ENCODE measurements at regions of chr12 and their contacts with region 1.

Region 1: GRCh38 chr12:6069437-6070107 is 54.9 kb downstream of the VWF start:
- DNase-seq: peak in 1 of 5 donors; percentile 52
- ATAC-seq: peak in 2 of 4 donors; percentile 36 to 61
- H3K4me3 ChIP-seq: no peak overlapping the region
- H3K27ac ChIP-seq: peak overlapping the region in 8 of 12 donors; percentile 18 to 87 (median 30)
- H3K4me1 ChIP-seq: peaks cover under 1 to 52% (median 20%) of the 10 kb centered on the region in 12 donors
- H3K27me3 ChIP-seq: no peaks in the 10 kb centered on the region
- CTCF ChIP-seq: no peak
- POLR2A ChIP-seq: no peak

Region 2: DNA sequence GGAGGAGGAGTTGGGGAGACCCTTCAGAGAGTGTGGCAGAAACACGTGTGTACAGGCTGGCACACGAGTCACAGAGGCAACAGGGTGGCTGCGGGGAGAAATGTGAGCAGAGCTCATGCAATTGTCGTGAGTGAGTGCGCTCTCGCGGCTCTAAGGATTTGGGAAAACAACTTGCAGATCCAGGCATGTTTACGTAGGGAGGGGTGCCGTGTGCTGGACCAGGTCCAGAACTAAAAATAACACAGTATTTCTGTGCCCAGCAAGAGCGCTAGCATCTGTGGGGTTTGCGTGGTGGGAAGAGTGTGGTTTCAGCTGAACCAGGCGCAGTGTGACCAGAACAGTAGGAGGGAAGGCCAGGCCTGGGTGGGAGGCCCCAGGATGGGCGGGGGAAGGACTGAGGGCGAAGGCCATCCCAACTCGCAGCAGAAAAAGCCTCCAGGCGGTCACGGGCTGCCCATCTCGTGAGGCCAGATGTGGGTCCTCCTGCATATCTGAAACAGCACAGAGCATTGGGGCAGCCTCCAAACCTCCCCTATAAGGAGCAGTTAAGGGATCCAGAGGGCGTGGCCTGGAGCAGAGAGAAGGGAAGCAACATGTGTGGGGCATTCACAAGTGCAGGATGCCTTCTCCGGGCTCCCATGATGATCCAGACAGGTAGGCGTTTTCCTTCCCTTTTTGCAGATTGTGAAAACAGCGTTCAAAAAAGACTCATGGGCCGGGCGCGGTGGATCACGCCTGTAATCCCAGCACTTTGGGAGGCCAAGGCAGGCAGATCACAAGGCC is 112.7 kb after region 1 on chr12:
- intact Hi-C with region 1: loop called in 6 of 10 experiments (anchors 5 to 10 kb)
- DNase-seq: peak in 4 of 5 donors; percentile 68 to 75 (median 72)
- ATAC-seq: peak; percentile 41 to 81 (median 72)
- H3K4me3 ChIP-seq: no peak overlapping the region
- H3K27ac ChIP-seq: peak overlapping the region; percentile 52 to 88 (median 70)
- H3K4me1 ChIP-seq: peaks cover 5 to 53% (median 46%) of the 10 kb centered on the region in 12 donors
- H3K27me3 ChIP-seq: no peaks in the 10 kb centered on the region
- CTCF ChIP-seq: no peak
- POLR2A ChIP-seq: peak in 1 of 2 donors; percentile 30

Measured in heart left ventricle (tissue), 16 donors.